ENCODE measurements at regions of chr4 and their contacts with region 1.

Region 1: GRCh38 chr4:94304365-94304971 is 38.2 kb downstream of the HPGDS start:
- DNase-seq: peak; percentile 10
- H3K4me3 ChIP-seq: no peak overlapping the region
- H3K27ac ChIP-seq: no peak overlapping the region
- H3K4me1 ChIP-seq: no peaks in the 10 kb centered on the region
- CTCF ChIP-seq: peak; percentile 87

Region 2: GRCh38 chr4:94214703-94215319 is 89.7 kb before region 1 on chr4:
- CTCF ChIA-PET with region 1: no interaction called
- POLR2A ChIA-PET with region 1: no interaction called
- intact Hi-C with region 1: no loop called
- DNase-seq: no peak
- H3K4me3 ChIP-seq: no peak overlapping the region
- H3K27ac ChIP-seq: no peak overlapping the region
- H3K4me1 ChIP-seq: peaks cover under 1% of the 10 kb centered on the region
- CTCF ChIP-seq: no peak

Region 3: DNA sequence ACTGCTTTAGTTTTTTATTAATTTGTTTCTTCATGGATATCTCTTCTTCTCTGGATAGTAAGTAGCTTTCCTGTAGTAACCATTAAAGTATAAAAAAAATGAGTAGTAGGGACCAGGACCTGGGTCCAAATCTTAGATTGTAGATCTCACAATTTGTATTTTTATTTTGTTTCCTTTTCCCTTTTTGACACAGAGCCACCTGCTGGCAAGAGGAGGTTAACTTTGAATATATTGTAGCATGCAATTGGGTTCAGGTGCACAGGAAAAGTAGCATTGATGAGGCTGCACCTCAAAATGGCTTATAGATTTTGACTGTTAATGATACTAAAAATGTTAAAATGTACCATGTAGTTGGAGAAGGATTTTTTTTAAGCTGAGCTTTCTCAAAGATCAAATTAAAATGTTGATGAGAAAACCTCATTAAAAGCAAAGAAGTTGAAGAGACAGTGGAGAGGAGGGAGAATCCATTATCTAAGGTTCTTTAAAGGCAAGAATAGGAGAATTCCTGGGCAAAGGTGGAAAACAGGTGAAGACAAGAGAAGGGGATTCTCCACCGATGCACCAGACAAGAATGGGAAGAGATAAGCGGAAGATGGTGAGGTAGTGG is 86.4 kb after region 1 on chr4:
- CTCF ChIA-PET with region 1: no interaction called
- POLR2A ChIA-PET with region 1: no interaction called
- intact Hi-C with region 1: loop called (anchors 2 kb)
- DNase-seq: peak; percentile 16
- H3K4me3 ChIP-seq: no peak overlapping the region
- H3K27ac ChIP-seq: no peak overlapping the region
- H3K4me1 ChIP-seq: no peaks in the 10 kb centered on the region
- CTCF ChIP-seq: peak; percentile 81

Region 4: DNA sequence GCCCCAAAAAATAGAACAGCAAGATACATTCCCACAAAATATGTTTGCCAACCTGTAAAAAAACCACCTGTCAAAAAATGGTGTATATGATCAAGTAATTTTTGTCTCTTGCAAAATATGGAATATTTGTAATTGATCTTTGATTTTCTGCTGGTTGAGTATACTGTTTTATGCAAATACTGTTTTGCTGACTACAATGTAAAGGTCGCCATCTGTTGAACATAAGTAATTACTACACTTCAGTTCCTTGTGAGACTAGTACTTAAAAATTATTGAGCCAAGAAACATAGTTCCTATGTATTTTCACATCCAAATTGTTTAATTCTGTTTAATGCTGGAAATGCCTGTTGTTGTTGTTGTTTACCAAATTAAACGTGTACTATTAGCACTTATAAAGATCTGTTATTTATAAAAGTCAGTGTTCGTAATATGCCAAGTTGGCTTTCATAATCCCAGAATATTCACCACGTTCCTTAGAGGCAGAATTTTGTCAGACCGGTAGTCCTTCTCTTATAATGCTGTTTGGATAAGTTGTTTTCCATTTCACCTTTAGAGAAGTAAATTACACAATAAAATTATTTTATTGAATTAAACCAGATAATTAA is 291.5 kb after region 1 on chr4:
- CTCF ChIA-PET with region 1: no interaction called
- POLR2A ChIA-PET with region 1: no interaction called
- intact Hi-C with region 1: loop called (anchors 5 kb)
- DNase-seq: peak; percentile 42
- H3K4me3 ChIP-seq: no peak overlapping the region
- H3K27ac ChIP-seq: no peak overlapping the region
- H3K4me1 ChIP-seq: no peaks in the 10 kb centered on the region
- CTCF ChIP-seq: peak; percentile 87